ENCODE measurements at regions of chr4 and their contacts with region 1.

Region 1: GRCh38 chr4:6681187-6681586 is 12.5 kb upstream of the S100P start:
- DNase-seq: no peak
- H3K4me3 Mint-ChIP-seq: no peak overlapping the region
- H3K27ac Mint-ChIP-seq: no peak overlapping the region
- H3K4me1 Mint-ChIP-seq: peaks cover 46% of the 10 kb centered on the region
- H3K27me3 Mint-ChIP-seq: no peaks in the 10 kb centered on the region

Region 2: DNA sequence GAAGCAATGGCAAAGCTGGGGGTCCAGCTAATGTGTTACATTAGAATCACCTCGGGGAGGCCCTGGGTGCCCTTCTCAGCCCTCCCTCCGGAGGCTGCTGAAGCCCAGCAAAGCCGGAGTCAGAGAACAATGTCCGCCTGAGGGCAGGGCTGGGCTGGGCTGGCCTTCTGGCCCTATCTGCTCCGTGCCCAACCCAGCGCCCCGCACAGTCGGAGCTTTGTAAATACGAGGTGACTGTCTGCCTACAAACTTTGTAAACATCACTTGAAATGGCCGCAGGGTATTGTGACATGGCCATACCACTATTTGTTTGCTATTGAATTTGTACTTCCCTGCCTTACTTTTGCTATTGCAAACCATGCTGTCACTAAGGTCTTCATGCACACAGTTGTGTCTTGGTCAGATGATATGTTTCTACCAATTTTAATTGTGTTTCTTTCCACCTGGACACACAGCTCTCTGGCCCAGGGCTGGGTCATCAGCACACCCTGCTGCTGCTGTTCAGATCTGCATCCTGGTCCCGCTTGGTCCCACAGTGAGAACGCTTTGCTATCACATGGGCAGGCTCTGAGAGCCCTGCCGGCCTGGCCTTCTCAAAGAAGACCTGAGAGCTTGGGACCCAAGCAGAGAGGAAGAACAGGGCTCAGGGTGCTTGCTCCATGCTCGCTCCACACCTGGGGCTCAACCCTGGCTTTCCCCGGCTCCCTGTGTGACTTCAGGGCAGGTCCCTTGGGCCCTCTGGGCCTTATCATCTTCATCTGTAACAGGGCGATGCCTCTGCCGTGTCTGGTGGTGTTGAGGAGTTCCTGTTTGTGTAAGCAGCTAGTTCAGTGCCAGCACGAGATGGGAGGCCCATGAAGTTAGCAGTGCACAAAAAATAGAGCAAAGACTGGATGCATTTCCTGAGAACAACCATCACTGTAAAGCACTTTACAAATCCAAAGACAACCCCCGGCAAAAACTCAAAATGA is 14.8 kb after region 1 on chr4:
- CTCF ChIA-PET with region 1: interaction called, 180 read pairs
- POLR2A ChIA-PET with region 1: interaction called, 374 read pairs
- DNase-seq: peak; percentile 77
- H3K4me3 Mint-ChIP-seq: peak overlapping the region; percentile 61
- H3K27ac Mint-ChIP-seq: peak overlapping the region; percentile 92
- H3K4me1 Mint-ChIP-seq: peaks cover 88% of the 10 kb centered on the region
- H3K27me3 Mint-ChIP-seq: no peaks in the 10 kb centered on the region

Measured in activated CD4-positive, alpha-beta memory T cell treated with anti-CD3 and anti-CD28 coated beads, Interleukin-2, amount 10 ng/mL, durations not matched to agents 7 days and 5 days (primary cell).